AG04449 (cell line): ENCODE measurements at regions of chr5 and their contacts with region 1.

Region 1: DNA sequence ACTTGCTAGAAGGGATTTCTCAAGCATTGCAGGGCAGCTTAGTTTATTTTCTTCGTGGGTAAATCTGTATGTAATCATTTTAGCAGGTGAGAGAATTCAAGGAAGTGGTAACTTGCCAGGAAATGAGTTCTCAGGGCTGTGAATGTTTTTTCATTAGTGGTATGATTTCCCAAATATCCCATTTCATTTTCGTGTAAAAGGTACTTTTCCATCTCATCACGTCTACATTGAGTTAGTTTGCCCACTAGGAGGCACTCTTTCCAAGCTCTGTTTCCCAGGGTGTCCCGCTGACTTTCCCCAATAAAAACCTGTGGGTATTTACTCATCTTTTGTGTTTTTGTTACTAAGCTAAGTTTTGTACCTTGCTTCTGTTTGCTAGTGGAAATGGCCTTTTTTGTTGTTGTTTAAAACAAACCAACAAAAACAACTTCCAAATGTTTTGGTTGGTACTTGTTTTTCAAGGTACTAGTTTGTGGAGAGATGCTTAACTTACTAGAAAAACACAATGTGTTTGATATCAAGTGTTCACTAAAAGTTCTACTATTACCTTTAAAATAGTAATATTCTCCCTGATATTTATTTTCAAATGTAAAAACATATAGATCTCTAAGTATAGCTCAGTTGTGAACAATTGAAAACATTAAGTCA is 373.6 kb downstream of the ADGRV1 start:
- DNase-seq: no peak
- H3K4me3 ChIP-seq: no peak overlapping the region
- CTCF ChIP-seq: peak; percentile 46

Region 2: DNA sequence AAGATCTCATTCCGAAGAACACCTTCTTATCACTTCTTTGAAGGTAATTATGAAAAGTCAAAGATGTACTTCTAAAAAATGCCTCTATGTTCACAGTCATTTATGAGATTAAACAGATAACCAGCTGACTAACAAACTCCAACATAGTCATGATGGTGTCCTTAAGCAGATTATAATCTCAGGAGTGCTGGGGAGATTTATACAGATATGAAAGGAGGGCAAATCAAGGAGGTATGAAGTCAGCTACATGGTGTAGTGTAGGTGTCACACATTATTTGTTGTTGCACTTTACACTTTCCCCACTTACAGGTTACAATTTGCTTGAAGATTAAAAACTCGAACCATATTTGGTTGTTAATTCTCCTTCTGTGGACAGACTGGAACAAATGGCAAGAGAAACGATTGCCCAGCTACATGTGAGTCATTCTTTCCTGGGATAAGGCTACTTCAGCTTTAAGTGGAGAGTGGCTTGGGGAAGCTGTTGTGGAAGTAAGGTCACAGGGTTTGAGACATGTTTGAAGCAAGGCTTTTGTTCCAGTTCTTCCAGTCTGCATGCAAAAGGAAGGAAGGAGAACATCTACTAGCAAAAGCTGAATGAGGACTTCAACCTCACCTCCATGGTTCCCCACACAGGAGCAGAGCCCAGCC is 53.5 kb before region 1 on chr5:
- CTCF ChIA-PET with region 1: no interaction called
- POLR2A ChIA-PET with region 1: no interaction called
- DNase-seq: no peak
- H3K4me3 ChIP-seq: no peak overlapping the region
- CTCF ChIP-seq: no peak

Region 3: DNA sequence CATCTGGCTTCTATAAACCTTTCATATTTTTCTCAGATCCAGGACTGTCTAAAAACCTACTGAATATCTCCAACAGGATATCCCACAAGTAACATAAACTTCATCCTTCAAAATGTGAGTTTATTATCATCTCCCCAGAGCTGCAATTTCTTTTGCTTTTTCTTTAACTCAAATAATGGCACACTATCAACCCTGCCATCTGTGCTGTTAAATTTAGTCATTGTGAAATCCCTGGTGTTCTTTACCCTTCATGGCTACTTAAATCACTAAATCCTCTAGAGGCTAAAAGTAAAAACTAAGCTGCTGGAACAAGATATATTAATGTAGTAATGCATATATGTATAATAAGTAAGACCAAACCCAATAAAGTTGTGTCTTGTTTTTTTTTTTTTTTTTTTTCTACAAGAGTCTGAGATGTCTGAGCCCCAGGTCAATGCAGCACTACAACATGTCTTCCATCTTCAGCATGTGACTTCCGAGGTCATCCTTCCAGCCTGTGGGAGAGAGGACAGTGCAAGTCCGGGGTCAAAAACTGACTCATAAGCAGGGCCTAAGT is 10.7 kb before region 1 on chr5:
- CTCF ChIA-PET with region 1: interaction called, 18 read pairs
- POLR2A ChIA-PET with region 1: no interaction called
- DNase-seq: no peak
- H3K4me3 ChIP-seq: no peak overlapping the region
- CTCF ChIP-seq: no peak

Region 4: DNA sequence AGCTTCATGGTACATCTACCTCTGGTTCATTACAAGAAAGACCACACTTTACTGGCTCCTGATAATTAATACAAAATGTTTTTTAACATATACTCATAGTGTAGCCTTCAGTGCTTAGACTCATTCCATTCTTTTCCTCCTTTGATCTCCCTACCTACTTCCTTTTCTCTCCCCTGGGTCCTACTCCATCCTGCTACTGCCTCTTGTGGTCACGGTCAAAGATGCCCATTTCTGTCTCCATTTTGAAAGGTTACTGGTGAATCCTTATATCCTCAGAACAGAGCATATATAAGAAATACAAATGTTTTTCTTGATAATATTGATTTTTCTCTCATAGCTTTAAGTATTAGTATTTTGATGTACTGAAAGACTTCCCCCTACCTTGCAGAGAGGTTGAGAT is 75.1 kb after region 1 on chr5:
- CTCF ChIA-PET with region 1: no interaction called
- POLR2A ChIA-PET with region 1: no interaction called
- DNase-seq: no peak
- H3K4me3 ChIP-seq: no peak overlapping the region
- CTCF ChIP-seq: no peak